AG04449 (cell line): ENCODE measurements at regions of chr2 and their contacts with region 1.

Region 1: DNA sequence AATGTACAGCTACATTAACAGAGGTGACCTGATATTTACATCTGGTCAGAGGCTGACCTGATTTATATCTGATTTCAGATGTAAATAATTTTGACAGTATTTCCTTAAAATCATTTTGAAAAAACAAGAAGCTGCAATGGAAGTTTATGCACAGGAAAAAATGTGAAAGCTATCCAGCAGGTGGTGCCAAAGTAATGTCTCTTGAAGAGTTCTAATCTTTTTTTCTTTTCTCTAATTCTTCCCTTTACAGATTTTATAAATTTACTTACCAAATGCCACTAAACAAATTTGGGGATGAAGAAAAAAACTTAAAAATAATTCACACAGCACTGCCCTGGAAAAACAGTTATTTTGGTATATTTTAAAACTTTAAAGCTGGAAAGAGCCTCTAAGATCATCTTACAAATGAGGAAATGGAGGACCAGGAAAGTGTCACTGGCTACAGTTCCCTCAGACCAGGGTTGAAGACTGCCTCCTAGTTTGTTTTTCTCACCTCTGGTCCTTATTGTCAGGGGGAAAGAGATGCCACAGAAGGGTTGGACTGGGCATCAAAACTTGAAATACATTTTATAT is 16.4 kb upstream of the FBLN7 start:
- DNase-seq: no peak
- H3K4me3 ChIP-seq: no peak overlapping the region
- CTCF ChIP-seq: peak; percentile 39

Region 2: GRCh38 chr2:111975053-111975552 is 146.7 kb before region 1 on chr2:
- CTCF ChIA-PET with region 1: no interaction called
- POLR2A ChIA-PET with region 1: no interaction called
- DNase-seq: peak; percentile 65
- H3K4me3 ChIP-seq: no peak overlapping the region
- CTCF ChIP-seq: no peak

Region 3: DNA sequence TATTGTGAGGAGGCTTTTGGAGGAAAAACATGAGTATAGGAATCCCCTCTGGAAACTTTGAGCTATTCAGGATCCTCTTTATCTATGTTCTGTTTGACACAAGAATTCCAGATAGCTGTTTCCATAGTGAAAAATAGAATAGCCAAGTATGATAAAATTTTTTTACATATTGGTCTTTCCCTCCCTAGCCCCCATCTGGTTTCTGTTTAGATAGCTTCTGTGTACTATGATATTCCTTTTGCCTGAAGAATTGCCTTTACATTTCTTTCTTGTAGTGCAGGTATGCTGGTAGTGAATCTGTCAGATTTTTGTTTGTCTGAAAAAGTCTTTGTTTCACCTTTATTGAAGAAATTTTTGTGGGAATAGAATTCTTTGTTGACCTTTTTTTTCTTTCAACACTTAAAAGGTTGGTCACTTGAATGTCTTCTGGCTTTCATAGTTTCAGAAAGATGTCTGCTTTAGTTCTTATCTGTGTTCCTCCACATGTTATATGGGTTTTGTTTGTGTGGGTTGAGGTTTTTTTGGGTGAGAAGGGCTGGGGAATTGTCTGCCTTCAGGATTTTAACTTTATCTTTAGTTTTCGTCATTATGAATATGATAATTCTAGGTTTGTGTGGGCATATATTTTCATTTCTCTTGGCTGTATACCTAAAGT is 13.5 kb before region 1 on chr2:
- CTCF ChIA-PET with region 1: interaction called, 30 read pairs
- POLR2A ChIA-PET with region 1: no interaction called
- DNase-seq: no peak
- H3K4me3 ChIP-seq: no peak overlapping the region
- CTCF ChIP-seq: no peak

Region 4: GRCh38 chr2:112138159-112138773 is 16.5 kb after region 1 on chr2 and contains the start of gene FBLN7:
- CTCF ChIA-PET with region 1: interaction called, 58 read pairs
- POLR2A ChIA-PET with region 1: no interaction called
- DNase-seq: no peak
- H3K4me3 ChIP-seq: peak within 1 kb of the TSS; percentile 58
- CTCF ChIP-seq: no peak

Region 5: GRCh38 chr2:112254466-112255239 is 132.9 kb after region 1 on chr2 and contains the start of gene ZC3H8:
- CTCF ChIA-PET with region 1: interaction called, 18 read pairs
- POLR2A ChIA-PET with region 1: no interaction called
- DNase-seq: no peak
- H3K4me3 ChIP-seq: peak within 1 kb of the TSS; percentile 75
- CTCF ChIP-seq: peak; percentile 6

Region 6: GRCh38 chr2:112259509-112260294 is 137.9 kb after region 1 on chr2:
- CTCF ChIA-PET with region 1: interaction called, 18 read pairs
- POLR2A ChIA-PET with region 1: no interaction called
- DNase-seq: no peak
- H3K4me3 ChIP-seq: no peak overlapping the region
- CTCF ChIP-seq: peak; percentile 93

Region 7: DNA sequence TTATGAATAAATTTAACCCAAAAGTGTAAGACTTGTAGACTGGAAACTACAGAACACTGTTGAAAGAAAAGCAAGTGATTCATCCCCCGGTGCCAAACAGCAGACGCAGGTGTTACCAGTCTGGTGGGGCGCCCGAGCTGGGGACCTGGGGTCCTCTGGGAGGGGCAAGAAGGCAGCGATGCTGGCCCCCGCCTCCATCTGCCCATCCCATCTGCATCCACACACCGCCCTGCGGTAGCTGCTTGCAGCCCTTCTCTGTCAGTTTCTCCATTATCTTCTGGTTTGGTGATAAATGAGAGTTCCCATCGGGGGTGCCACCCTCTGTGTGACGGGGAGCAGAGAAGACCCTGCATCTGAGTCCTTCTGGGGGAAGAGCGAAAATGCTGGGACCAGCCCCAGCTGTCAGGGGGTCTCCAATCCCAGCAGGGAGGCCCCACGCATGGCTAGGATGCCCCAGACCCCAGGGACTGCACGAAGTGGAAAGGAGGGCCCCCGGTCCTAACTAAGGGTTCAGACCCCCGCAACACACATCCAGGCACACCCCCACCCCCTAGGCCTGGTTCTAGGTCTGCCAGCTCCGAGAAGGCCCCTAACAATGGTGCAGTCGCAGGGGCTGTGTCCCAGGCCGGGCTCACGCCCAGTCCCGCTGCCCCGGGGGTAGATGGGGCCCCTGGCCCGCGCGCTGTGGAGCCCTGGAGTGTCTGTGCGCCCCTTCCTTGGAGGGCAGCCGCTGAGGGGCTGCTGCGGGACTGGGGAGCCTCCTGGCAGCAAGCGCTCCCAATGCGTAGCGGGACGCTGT is 312.4 kb after region 1 on chr2:
- CTCF ChIA-PET with region 1: interaction called, 17 read pairs
- POLR2A ChIA-PET with region 1: no interaction called
- DNase-seq: no peak
- H3K4me3 ChIP-seq: no peak overlapping the region
- CTCF ChIP-seq: no peak